ENCODE measurements at regions of chr6 and their contacts with region 1.

Region 1: DNA sequence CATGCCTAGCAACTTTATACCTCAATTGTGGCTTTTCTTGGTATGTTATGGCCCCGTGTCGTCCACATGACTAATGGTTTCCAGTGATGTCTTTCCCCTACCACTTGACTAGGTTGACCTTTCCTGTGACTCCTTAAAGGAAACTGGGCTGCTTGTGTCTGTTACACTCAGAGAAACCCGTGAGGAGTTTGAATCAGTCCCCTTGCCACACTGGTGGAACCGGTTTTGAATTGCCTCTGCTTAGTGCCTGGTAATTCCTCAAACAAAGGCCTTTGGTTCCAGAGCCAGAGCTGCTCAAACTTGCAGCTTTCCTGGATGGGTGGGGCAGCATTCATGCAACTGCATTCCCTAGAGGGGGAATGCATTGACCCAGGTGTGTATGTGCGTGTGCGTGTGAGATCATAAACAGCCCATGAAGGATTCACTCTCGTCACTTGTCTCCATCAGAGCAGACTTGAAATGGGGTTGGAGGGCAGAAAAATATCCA is 22.0 kb downstream of the ECT2L start:
- DNase-seq: peak; percentile 41 to 64
- H3K4me3 ChIP-seq: no peak overlapping the region
- H3K27ac ChIP-seq: 0 out of 2 replicates have a peak overlapping the region, but pooled peaks have one; percentile 20
- H3K4me1 ChIP-seq: peaks cover 0 to 6% (median 3%) of the 10 kb centered on the region in 4 experiments; a peak in 4 of 7 replicates
- H3K27me3 ChIP-seq: no peaks in the 10 kb centered on the region; a peak in 1 of 7 replicates
- CTCF ChIP-seq: no peak
- EP300 ChIP-seq: peak in 1 of 2 experiments; percentile 82; a peak in 1 of 3 replicates
- POLR2A ChIP-seq: peak in 1 of 2 experiments; percentile 44; a peak in 1 of 3 replicates
- RAD21 ChIP-seq: peak; percentile 2 to 18; a peak in 3 of 4 replicates

Region 2: DNA sequence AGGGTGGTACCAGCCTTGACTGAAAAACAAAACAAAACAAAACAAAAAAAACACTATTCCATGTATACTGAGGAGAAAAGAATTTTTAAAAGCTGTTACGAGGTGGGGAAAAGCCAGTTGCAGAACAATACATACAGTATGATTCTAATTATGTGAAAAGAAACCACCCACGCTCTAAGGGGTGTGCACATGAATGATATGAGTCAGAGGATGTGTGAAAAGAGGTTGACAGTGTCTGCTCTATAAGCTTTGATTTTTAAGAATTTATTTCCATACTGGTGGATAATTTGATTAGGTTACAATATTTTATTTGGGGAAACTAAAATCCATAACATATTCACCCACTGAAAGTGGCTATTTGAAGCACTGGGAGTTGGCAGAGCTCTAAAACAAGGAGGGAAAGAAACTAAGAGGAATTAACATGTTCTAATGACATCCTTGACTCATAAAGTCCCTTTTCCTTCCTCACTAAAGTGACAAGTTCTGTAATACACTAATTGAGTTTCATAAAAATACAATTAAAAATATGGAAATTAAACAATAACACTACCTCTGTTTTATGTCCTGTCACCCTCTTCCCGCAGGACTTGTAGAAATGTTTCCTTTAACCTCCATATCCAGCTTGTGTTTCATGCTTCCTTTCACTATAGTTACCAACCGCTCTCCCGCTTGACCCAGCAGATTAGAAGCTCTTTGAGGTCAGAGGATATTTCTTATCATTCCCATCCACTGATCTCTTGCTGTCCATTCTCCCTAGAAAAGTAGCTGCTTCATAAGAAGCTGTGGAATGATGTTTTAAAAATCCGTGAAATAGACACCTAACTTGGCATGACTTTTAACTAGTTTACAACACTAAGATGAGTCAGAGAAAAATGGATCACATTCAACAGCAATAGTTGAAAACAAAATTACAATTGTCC is 162.9 kb before region 1 on chr6:
- CTCF ChIA-PET with region 1: no interaction called
- POLR2A ChIA-PET with region 1: no interaction called
- DNase-seq: no peak
- H3K4me3 ChIP-seq: no peak overlapping the region
- H3K27ac ChIP-seq: no peak overlapping the region
- H3K4me1 ChIP-seq: no peaks in the 10 kb centered on the region
- H3K27me3 ChIP-seq: no peaks in the 10 kb centered on the region
- CTCF ChIP-seq: no peak
- EP300 ChIP-seq: no peak
- POLR2A ChIP-seq: no peak
- RAD21 ChIP-seq: no peak

Region 3: DNA sequence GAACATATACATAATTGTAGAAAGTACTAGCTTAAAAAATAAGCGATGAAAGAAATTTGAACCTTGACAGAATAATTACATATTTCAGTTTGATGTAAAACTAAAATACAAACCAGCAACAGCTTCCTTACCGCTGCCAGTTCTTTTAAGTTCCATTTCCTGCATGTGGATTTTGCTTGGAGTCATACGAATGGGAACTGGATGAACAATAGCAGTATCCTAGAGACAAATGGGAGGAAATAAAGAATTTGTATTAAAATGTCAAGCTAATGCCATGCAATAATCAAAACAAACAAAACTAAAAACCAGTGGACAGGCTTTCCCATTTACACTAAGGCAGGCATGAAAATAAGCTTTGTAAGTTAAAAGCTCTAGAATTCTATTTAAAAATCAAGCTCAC is 103.0 kb after region 1 on chr6:
- CTCF ChIA-PET with region 1: interaction called, 11 read pairs
- POLR2A ChIA-PET with region 1: no interaction called
- DNase-seq: no peak
- H3K4me3 ChIP-seq: no peak overlapping the region
- H3K27ac ChIP-seq: no peak overlapping the region
- H3K4me1 ChIP-seq: no peaks in the 10 kb centered on the region
- H3K27me3 ChIP-seq: no peaks in the 10 kb centered on the region
- CTCF ChIP-seq: no peak
- EP300 ChIP-seq: no peak
- POLR2A ChIP-seq: no peak
- RAD21 ChIP-seq: no peak

Region 4: GRCh38 chr6:139028658-139029469 is 211.0 kb after region 1 on chr6 and contains the start of gene ABRACL:
- CTCF ChIA-PET with region 1: interaction called, 3 read pairs
- POLR2A ChIA-PET with region 1: interaction called, 10 read pairs
- DNase-seq: peak in 1 of 2 experiments; percentile 76
- H3K4me3 ChIP-seq: peak within 1 kb of the TSS; percentile 91 to 99 (median 96)
- H3K27ac ChIP-seq: peak within 1 kb of the TSS; percentile 91
- H3K4me1 ChIP-seq: peaks cover 9 to 18% (median 14%) of the 10 kb centered on the region in 4 experiments
- H3K27me3 ChIP-seq: no peaks in the 10 kb centered on the region; a peak in 1 of 7 replicates
- CTCF ChIP-seq: no peak
- EP300 ChIP-seq: no peak
- POLR2A ChIP-seq: peak in 1 of 2 experiments; percentile 69; a peak in 1 of 3 replicates
- RAD21 ChIP-seq: no peak
- total RNA-seq, gene ABRACL: 167 and 172 TPM in 2 replicates

Region 5: DNA sequence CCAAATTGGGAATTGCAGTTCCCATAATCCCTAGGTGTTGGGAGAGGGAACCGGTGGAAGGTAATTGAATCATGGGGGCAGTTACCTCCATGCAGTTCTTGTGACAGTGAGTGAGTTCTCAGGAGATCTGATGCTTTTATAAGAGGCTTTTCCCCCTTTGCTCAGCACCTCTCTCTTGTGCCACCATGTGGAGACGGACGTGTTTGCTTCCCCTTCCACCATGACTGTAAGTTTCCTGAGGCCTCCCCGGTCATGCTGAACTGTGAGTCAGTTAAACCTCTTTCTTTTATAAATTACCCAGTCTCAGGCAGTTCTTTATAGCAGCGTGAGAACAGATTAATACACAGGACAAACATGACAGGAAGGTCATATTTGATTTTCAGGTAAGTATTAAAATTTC is 291.7 kb after region 1 on chr6:
- CTCF ChIA-PET with region 1: interaction called, 13 read pairs
- POLR2A ChIA-PET with region 1: no interaction called
- DNase-seq: peak in 1 of 2 experiments; percentile 53
- H3K4me3 ChIP-seq: no peak overlapping the region
- H3K27ac ChIP-seq: no peak overlapping the region
- H3K4me1 ChIP-seq: peaks cover 0 to 2% (median 0%) of the 10 kb centered on the region in 4 experiments; a peak in 1 of 7 replicates
- H3K27me3 ChIP-seq: no peaks in the 10 kb centered on the region
- CTCF ChIP-seq: peak; percentile 59 to 64 (median 62)
- EP300 ChIP-seq: no peak
- POLR2A ChIP-seq: no peak
- RAD21 ChIP-seq: peak; percentile 73 to 75

Measured in H1 (cell line).